PC-9 (cell line): ENCODE measurements at regions of chr12 and their contacts with region 1.

Region 1: DNA sequence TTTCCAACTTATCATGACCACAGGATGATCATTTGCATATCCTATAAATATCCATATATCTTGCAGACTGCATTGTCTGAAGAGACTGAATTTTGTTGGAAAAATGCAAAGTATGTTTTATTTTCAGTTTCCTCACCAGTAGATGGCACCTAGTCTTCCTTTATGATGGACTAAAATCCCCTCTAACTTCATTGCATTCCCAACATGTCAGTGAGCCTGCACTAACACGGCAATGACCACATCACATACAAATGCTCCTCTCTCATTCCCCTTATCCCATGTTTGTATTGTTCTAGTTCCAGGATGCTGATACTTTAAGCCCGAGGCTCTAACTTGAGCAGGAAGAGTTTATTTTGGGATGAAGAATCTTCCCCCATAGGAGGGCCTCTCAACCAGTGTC is 24.7 kb upstream of the MYBPC1 start:
- DNase-seq: peak in 1 of 2 experiments; percentile 47
- H3K4me3 ChIP-seq: no peak overlapping the region
- H3K27ac ChIP-seq: no peak overlapping the region
- H3K4me1 ChIP-seq: peaks cover 4% of the 10 kb centered on the region; the same call in 1 of the 2 replicates
- H3K27me3 ChIP-seq: no peaks in the 10 kb centered on the region
- CTCF ChIP-seq: peak; percentile 65

Region 2: DNA sequence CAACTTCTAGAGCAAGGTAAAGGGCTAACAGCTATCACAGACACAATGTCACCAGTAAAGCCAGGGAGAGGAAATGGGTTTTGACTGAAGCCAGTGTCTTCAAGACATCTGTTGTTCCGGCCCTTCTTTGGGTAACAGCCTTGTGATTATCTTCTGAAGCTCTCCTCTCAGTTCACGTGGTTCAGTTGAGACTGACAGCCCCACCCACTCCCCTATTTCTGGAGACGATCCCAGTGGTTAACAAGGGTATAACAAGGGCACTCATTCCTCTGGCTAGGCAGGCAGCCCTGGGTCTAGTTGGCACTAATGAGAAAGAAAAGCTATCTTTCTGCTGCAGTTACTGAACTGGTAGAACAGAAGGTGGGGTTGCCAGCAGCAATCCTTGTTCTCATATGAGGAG is 253.8 kb after region 1 on chr12:
- CTCF ChIA-PET with region 1: interaction called, 12 read pairs
- POLR2A ChIA-PET with region 1: no interaction called
- intact Hi-C with region 1: no loop called
- DNase-seq: no peak
- H3K4me3 ChIP-seq: no peak overlapping the region
- H3K27ac ChIP-seq: no peak overlapping the region
- H3K4me1 ChIP-seq: no peaks in the 10 kb centered on the region
- H3K27me3 ChIP-seq: no peaks in the 10 kb centered on the region
- CTCF ChIP-seq: no peak